Naive thymus-derived CD4-positive, alpha-beta T cell (primary cell): ENCODE measurements at regions of chr6 and their contacts with region 1.

Region 1: DNA sequence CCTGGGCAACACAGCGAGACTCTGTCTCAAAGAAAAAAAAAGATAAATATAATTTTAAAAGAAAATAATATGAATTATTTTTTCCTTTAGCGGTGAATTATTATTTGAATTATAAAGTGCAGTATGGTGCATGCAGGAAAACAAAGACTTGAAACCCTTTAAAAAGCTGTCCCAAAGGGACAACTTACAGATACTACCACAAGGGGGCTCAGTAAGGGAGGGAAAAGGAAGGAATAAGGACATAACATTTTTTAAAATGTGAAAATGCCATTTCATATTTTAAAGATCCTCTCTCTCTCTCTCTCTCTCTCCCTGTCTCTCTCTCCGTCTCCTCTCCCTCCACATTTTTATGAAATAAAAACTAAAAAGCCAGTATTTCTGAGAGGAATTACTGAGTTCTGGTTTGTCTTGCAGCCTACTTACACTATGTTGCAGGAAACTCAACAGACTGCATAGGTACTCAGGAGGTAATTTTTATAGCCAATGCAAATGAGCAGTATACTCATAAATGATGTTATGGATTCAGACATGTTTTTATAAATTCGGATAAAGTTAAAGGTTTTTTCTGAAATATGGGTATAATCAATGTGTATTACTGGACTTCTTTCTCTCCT is 455.0 kb upstream of the GJE1 start:
- DNase-seq: peak in 3 of 9 donors; percentile 1 to 8 (median 2)
- ATAC-seq: no peak
- H3K4me3 ChIP-seq: no peak overlapping the region
- H3K4me3 Mint-ChIP-seq: no peak overlapping the region
- H3K27ac ChIP-seq: no peak overlapping the region
- H3K27ac Mint-ChIP-seq: no peak overlapping the region
- H3K4me1 ChIP-seq: no peaks in the 10 kb centered on the region
- H3K4me1 Mint-ChIP-seq: peaks cover 0 to 1% (median 0%) of the 10 kb centered on the region in 7 donors
- H3K27me3 ChIP-seq: no peaks in the 10 kb centered on the region
- H3K27me3 Mint-ChIP-seq: peaks cover 0 to 7% (median 0%) of the 10 kb centered on the region in 5 donors

Region 2: GRCh38 chr6:141309295-141309694 is 368.4 kb before region 1 on chr6:
- CTCF ChIA-PET with region 1: no interaction called
- POLR2A ChIA-PET with region 1: no interaction called
- intact Hi-C with region 1: loop called in 1 of 2 experiments (anchors 10 kb)
- DNase-seq: peak in 2 of 9 donors; percentile 4 to 15
- ATAC-seq: peak; percentile 62
- H3K4me3 ChIP-seq: no peak overlapping the region
- H3K4me3 Mint-ChIP-seq: no peak overlapping the region
- H3K27ac ChIP-seq: no peak overlapping the region
- H3K27ac Mint-ChIP-seq: no peak overlapping the region
- H3K4me1 ChIP-seq: no peaks in the 10 kb centered on the region
- H3K4me1 Mint-ChIP-seq: no peaks in the 10 kb centered on the region
- H3K27me3 ChIP-seq: no peaks in the 10 kb centered on the region
- H3K27me3 Mint-ChIP-seq: peaks cover 0 to 7% (median 0%) of the 10 kb centered on the region in 5 donors

Region 3: GRCh38 chr6:141851062-141851461 is 173.4 kb after region 1 on chr6:
- CTCF ChIA-PET with region 1: no interaction called
- POLR2A ChIA-PET with region 1: no interaction called
- intact Hi-C with region 1: no loop called
- DNase-seq: no peak
- ATAC-seq: no peak
- H3K4me3 ChIP-seq: no peak overlapping the region
- H3K4me3 Mint-ChIP-seq: no peak overlapping the region
- H3K27ac ChIP-seq: no peak overlapping the region
- H3K27ac Mint-ChIP-seq: no peak overlapping the region
- H3K4me1 ChIP-seq: peaks cover 0 to 29% of the 10 kb centered on the region in 2 donors
- H3K4me1 Mint-ChIP-seq: peaks cover 2 to 28% (median 12%) of the 10 kb centered on the region in 7 donors
- H3K27me3 ChIP-seq: no peaks in the 10 kb centered on the region
- H3K27me3 Mint-ChIP-seq: no peaks in the 10 kb centered on the region

Region 4: DNA sequence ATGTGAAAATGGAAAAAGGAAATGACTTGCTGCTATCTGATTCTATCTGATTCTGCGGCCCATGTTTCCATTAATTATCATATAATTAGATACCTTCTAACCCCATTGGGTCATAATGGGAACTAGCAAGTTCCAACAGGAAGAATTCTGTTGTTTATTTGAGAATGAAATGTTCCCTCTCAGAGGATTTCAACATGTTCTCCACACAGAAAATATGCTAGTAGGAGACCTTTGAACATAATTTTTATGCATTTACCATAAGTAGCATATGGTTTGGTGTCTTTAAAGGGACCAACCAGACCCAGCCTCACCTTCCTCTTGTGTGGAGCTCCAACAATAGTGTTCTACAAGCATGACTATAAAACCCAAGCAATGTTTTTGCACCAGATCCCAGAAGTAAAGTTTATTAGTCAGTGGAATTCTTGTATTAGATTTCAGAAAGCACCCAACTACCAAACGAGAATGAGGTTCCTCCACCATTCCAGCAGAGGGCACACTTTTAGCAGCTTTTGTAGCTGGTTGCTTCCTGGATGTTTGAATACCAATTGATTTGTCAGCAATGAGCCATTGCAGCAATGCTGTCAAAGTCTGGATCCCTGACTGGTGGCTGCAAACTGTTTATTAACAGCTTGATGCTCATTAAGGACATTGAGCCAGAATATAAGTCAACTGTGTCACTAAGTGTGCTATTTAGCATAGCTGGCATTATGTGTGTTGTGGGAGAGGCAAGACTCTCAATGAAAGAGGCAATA is 311.4 kb after region 1 on chr6:
- CTCF ChIA-PET with region 1: no interaction called
- POLR2A ChIA-PET with region 1: no interaction called
- intact Hi-C with region 1: loop called in 1 of 2 experiments (anchors 5 kb)
- DNase-seq: peak in 6 of 9 donors; percentile 4 to 30 (median 13)
- ATAC-seq: peak; percentile 50
- H3K4me3 ChIP-seq: no peak overlapping the region
- H3K4me3 Mint-ChIP-seq: no peak overlapping the region
- H3K27ac ChIP-seq: no peak overlapping the region
- H3K27ac Mint-ChIP-seq: no peak overlapping the region
- H3K4me1 ChIP-seq: no peaks in the 10 kb centered on the region
- H3K4me1 Mint-ChIP-seq: no peaks in the 10 kb centered on the region
- H3K27me3 ChIP-seq: no peaks in the 10 kb centered on the region
- H3K27me3 Mint-ChIP-seq: peaks cover 0 to 20% (median 8%) of the 10 kb centered on the region in 5 donors

Region 5: GRCh38 chr6:142030115-142030619 is 352.5 kb after region 1 on chr6:
- CTCF ChIA-PET with region 1: no interaction called
- POLR2A ChIA-PET with region 1: no interaction called
- intact Hi-C with region 1: no loop called
- DNase-seq: no peak
- ATAC-seq: no peak
- H3K4me3 ChIP-seq: no peak overlapping the region
- H3K4me3 Mint-ChIP-seq: peak overlapping the region in 7 of 10 donors; percentile 1 to 50 (median 31)
- H3K27ac ChIP-seq: no peak overlapping the region
- H3K27ac Mint-ChIP-seq: peak overlapping the region in 1 of 9 donors; percentile 4
- H3K4me1 ChIP-seq: no peaks in the 10 kb centered on the region
- H3K4me1 Mint-ChIP-seq: peaks cover 0 to 4% (median 0%) of the 10 kb centered on the region in 7 donors
- H3K27me3 ChIP-seq: no peaks in the 10 kb centered on the region
- H3K27me3 Mint-ChIP-seq: peaks cover 0 to 36% (median 16%) of the 10 kb centered on the region in 5 donors

Region 6: DNA sequence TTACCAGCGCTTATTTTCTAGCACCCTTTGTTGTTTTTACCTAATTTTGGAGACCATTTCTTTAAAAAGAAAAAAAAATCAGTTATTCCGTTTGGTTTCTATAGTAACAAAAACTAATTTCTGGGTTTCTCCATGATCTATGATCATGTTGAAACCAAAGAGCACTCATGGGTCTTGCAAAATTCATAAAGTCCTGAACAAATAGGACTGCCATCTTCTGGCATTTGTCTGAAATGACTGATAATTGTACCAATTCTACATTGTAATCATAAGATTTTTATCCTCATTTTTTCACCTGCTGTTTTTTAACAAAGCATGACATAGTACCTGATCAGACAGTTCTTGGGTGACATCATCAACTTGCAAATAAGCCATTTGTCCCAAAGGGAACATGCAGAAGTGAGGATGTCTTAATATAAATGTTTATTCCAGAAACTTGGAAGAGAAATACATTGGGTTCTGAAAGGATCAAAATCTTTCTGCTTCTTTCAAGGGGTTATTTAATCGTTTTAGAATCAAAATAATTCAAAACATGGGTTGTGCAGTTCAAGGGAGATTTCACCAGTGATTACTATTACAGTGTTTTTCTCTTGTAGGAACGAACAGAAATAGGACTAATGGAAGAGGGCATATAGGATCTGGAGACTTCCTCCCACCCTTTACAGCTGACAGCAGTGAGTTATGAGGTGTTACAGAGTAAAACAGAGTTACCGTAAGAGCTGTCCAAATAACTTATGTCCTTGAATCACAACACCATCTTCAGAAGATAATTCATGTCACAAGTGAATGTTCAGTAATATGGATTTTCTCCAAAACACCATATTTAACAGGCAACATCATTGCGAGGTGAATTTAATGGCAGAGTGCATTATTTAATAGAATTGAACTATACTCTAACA is 367.9 kb after region 1 on chr6:
- CTCF ChIA-PET with region 1: no interaction called
- POLR2A ChIA-PET with region 1: no interaction called
- intact Hi-C with region 1: loop called in 1 of 2 experiments (anchors 1 kb)
- DNase-seq: no peak
- ATAC-seq: no peak
- H3K4me3 ChIP-seq: no peak overlapping the region
- H3K4me3 Mint-ChIP-seq: no peak overlapping the region
- H3K27ac ChIP-seq: no peak overlapping the region
- H3K27ac Mint-ChIP-seq: no peak overlapping the region
- H3K4me1 ChIP-seq: no peaks in the 10 kb centered on the region
- H3K4me1 Mint-ChIP-seq: no peaks in the 10 kb centered on the region
- H3K27me3 ChIP-seq: no peaks in the 10 kb centered on the region
- H3K27me3 Mint-ChIP-seq: peaks cover 0 to 35% (median 26%) of the 10 kb centered on the region in 5 donors